Common myeloid progenitor, CD34-positive (primary cell): ENCODE measurements at regions of chr4 and their contacts with region 1.

Region 1: DNA sequence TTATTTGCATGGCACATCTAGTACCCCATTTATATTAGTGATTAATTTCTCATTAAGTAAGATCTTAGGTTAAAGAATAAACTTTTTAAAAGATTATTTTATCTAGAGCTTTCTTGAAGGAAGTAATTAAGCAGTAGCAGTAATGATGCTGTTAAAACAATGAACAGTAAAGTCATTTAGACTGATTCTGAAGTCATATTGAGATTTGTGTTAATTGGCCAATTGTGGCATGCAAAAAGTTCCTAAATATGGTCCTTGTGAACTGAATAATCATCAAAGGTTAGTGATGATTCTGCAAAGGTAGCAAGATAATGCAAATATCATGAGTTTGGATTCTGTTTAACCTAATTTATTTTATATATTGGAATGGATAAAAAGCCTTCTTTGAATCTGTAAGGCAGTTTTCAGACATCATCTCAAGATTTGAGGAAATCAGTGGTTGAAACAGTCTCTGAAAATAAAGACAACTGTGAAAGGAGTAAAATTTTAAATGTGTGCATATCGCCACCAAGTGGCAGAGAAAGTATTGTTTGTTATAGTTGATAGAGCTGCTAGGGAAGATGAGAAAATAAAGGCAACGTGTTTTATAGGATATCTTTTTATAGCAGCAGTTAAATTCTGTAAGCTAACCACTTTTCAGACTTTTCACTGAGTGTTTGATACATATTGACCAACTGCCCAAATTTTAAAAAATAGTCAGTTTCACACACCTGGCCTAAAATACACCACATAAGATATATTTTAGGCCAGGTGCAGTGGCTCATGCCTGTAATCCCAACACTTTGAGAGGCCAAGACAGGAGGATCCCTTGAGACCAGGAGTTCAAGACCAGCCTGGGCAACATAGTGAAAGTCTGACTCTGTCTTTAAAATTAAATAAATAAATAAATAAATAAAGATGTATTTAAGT is 79.6 kb downstream of the CCKAR start:
- DNase-seq: peak; percentile 50 to 75 (median 70)
- H3K4me3 ChIP-seq: no peak overlapping the region
- H3K27ac ChIP-seq: no peak overlapping the region
- H3K4me1 ChIP-seq: no peaks in the 10 kb centered on the region
- H3K27me3 ChIP-seq: no peaks in the 10 kb centered on the region

Region 2: GRCh38 chr4:26028793-26029567 is 381.7 kb before region 1 on chr4:
- CTCF ChIA-PET with region 1: interaction called, 11 read pairs
- POLR2A ChIA-PET with region 1: no interaction called
- DNase-seq: peak; percentile 50 to 68 (median 64)
- H3K4me3 ChIP-seq: peak overlapping the region in 1 of 7 experiments; percentile 47
- H3K27ac ChIP-seq: no peak overlapping the region
- H3K4me1 ChIP-seq: peaks cover 0 to 6% (median 2%) of the 10 kb centered on the region in 4 experiments
- H3K27me3 ChIP-seq: peaks cover 0 to 23% (median 9%) of the 10 kb centered on the region in 5 experiments

Region 3: DNA sequence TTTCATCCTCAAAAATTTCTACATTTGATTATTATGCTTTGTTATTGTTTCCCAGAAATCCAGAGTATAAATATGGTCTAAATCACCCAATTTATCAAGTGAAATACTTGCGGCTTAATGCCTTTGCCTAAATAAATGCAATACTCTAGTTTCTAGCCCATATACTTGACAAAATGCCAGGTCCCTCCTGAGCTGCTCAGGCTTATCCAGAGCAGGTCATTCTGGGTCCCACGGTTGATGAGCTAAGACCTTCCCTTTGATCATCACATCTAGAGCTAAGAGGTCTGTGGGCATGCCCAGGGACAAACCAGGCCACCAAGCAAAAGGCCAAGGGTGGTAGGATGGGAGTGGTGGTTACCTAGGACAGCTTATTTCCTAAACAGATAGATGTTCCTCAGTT is 316.6 kb before region 1 on chr4:
- CTCF ChIA-PET with region 1: no interaction called
- POLR2A ChIA-PET with region 1: no interaction called
- DNase-seq: no peak
- H3K4me3 ChIP-seq: no peak overlapping the region
- H3K27ac ChIP-seq: no peak overlapping the region
- H3K4me1 ChIP-seq: peaks cover 0 to under 1% (median under 1%) of the 10 kb centered on the region in 4 experiments
- H3K27me3 ChIP-seq: peaks cover 0 to 4% (median 0%) of the 10 kb centered on the region in 5 experiments

Region 4: GRCh38 chr4:26183017-26183416 is 227.6 kb before region 1 on chr4:
- CTCF ChIA-PET with region 1: no interaction called
- POLR2A ChIA-PET with region 1: no interaction called
- DNase-seq: no peak
- H3K4me3 ChIP-seq: no peak overlapping the region
- H3K27ac ChIP-seq: no peak overlapping the region
- H3K4me1 ChIP-seq: no peaks in the 10 kb centered on the region
- H3K27me3 ChIP-seq: no peaks in the 10 kb centered on the region

Region 5: DNA sequence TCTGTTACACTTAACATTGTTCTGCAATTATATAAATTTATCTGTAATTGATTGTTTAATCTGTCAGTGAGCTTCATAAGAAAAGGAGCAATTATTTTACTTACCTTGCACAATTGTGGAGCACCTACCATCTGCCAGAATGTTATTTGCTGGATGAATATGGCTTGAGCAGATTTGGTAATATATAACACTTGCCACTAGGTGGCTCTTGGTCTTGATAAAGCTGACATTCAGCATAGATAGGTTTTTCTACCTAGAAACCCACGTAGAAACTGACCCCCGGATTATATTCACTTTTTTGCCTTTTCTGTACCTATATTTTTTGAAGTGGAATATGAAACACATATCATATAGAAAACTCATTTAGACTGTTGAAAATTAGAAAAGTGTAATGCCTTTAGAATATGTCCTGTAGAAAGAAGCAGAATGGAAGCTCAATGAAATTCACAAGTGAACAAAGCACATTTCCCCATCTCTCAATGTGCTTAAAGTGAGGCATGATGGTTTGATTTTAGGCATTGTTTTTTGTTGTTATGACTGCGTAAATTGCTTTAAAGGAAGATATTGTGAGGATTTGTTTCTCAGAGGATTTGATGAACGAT is 80.4 kb before region 1 on chr4:
- CTCF ChIA-PET with region 1: interaction called, 78 read pairs
- POLR2A ChIA-PET with region 1: no interaction called
- DNase-seq: peak; percentile 56 to 70 (median 68)
- H3K4me3 ChIP-seq: no peak overlapping the region
- H3K27ac ChIP-seq: no peak overlapping the region
- H3K4me1 ChIP-seq: peaks cover 0 to 7% (median under 1%) of the 10 kb centered on the region in 4 experiments
- H3K27me3 ChIP-seq: no peaks in the 10 kb centered on the region

Region 6: GRCh38 chr4:26397086-26397485 is 13.6 kb before region 1 on chr4:
- CTCF ChIA-PET with region 1: interaction called, 24 read pairs
- POLR2A ChIA-PET with region 1: no interaction called
- DNase-seq: no peak
- H3K4me3 ChIP-seq: no peak overlapping the region
- H3K27ac ChIP-seq: no peak overlapping the region
- H3K4me1 ChIP-seq: no peaks in the 10 kb centered on the region
- H3K27me3 ChIP-seq: no peaks in the 10 kb centered on the region

Region 7: GRCh38 chr4:26466578-26467270 is 56.1 kb after region 1 on chr4:
- CTCF ChIA-PET with region 1: no interaction called
- POLR2A ChIA-PET with region 1: no interaction called
- DNase-seq: no peak
- H3K4me3 ChIP-seq: no peak overlapping the region
- H3K27ac ChIP-seq: no peak overlapping the region
- H3K4me1 ChIP-seq: no peaks in the 10 kb centered on the region
- H3K27me3 ChIP-seq: no peaks in the 10 kb centered on the region